ENCODE measurements at regions of chrX and their contacts with region 1.

Region 1: DNA sequence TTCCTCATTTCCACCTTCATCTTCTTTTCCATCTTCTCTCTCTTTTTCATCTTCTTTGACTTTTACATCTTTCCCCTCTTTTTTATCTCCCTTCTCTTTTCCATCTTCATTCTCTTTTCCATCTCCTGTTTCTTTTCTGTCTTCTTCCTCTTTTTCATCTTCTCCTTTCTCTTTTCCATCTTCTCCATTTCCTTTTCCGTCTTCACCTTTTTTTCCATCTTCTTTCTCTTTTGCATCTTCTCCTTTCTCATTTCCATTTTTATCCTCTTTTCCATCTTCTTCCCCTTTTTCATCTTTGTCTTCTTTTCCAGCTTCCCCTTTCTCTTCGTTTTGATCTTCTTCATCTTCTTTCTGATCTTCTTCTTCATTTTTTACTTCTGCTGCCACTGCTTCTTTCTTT is 87.0 kb downstream of the HMGN5 start:
- DNase-seq: no peak

Region 2: DNA sequence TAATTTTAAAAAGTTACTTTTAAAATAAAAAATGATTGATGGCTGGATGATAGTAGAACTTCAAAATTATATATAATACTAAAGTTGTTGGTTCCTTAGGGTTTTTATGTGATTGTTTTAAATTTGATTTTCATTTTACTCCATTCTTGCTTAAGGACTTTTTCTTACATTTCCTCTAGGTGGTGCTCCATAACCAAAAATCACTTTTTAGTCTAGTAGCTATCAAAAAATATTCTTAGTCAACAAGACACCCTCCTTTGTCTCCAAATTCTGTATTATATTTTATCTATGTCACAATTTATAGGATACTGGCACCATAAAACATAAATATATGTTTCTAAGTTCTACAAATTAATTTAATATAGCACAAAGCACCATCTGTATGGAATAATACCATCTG is 237.9 kb before region 1 on chrX:
- intact Hi-C with region 1: loop called (anchors 10 kb)
- DNase-seq: no peak